GM12878 (cell line): ENCODE measurements at regions of chr22 and their contacts with region 1.

Region 1: GRCh38 chr22:26461188-26461810 is 22.3 kb downstream of the HPS4 start:
- DNase-seq: no peak
- ATAC-seq: peak; percentile 76
- H3K4me3 ChIP-seq: no peak overlapping the region
- H3K27ac ChIP-seq: no peak overlapping the region
- H3K4me1 ChIP-seq: no peaks in the 10 kb centered on the region
- H3K27me3 ChIP-seq: no peaks in the 10 kb centered on the region
- CTCF ChIP-seq: peak; percentile 69 to 82 (median 81)
- EP300 ChIP-seq: no peak
- POLR2A ChIP-seq: no peak
- RAD21 ChIP-seq: peak; percentile 68

Region 2: GRCh38 chr22:26377170-26377830 is 84.0 kb before region 1 on chr22:
- CTCF ChIA-PET with region 1: interaction called, 11 read pairs
- POLR2A ChIA-PET with region 1: no interaction called
- RAD21 ChIA-PET with region 1: interaction called, 3 read pairs
- SMC1A ChIA-PET with region 1: interaction called, 6 read pairs
- in situ Hi-C with region 1: no loop called
- intact Hi-C with region 1: no loop called
- DNase-seq: no peak
- ATAC-seq: no peak
- H3K4me3 ChIP-seq: no peak overlapping the region
- H3K27ac ChIP-seq: no peak overlapping the region
- H3K4me1 ChIP-seq: no peaks in the 10 kb centered on the region
- H3K27me3 ChIP-seq: peaks cover 3 to 9% of the 10 kb centered on the region in 2 experiments
- CTCF ChIP-seq: no peak; a peak in 1 of 6 replicates
- EP300 ChIP-seq: no peak
- POLR2A ChIP-seq: no peak
- RAD21 ChIP-seq: no peak

Region 3: GRCh38 chr22:26404851-26405421 is 56.4 kb before region 1 on chr22:
- CTCF ChIA-PET with region 1: interaction called, 111 read pairs
- POLR2A ChIA-PET with region 1: no interaction called
- RAD21 ChIA-PET with region 1: interaction called, 3 read pairs
- SMC1A ChIA-PET with region 1: interaction called, 73 read pairs
- in situ Hi-C with region 1: loop called (anchors 5 kb)
- intact Hi-C with region 1: no loop called
- DNase-seq: no peak
- ATAC-seq: peak; percentile 31; the same call in 2 of the 3 replicates
- H3K4me3 ChIP-seq: no peak overlapping the region
- H3K27ac ChIP-seq: no peak overlapping the region
- H3K4me1 ChIP-seq: no peaks in the 10 kb centered on the region; the same call in 1 of the 2 replicates
- H3K27me3 ChIP-seq: no peaks in the 10 kb centered on the region
- CTCF ChIP-seq: no peak
- EP300 ChIP-seq: no peak
- POLR2A ChIP-seq: no peak
- RAD21 ChIP-seq: no peak

Region 4: GRCh38 chr22:26471522-26471921 is 10.2 kb after region 1 on chr22:
- CTCF ChIA-PET with region 1: interaction called, 23 read pairs
- POLR2A ChIA-PET with region 1: no interaction called
- RAD21 ChIA-PET with region 1: no interaction called
- SMC1A ChIA-PET with region 1: interaction called, 3 read pairs
- in situ Hi-C with region 1: no loop called
- intact Hi-C with region 1: no loop called
- DNase-seq: no peak
- ATAC-seq: no peak
- H3K4me3 ChIP-seq: no peak overlapping the region
- H3K27ac ChIP-seq: no peak overlapping the region
- H3K4me1 ChIP-seq: peaks cover 5% of the 10 kb centered on the region
- H3K27me3 ChIP-seq: no peaks in the 10 kb centered on the region
- CTCF ChIP-seq: no peak
- EP300 ChIP-seq: no peak
- POLR2A ChIP-seq: no peak
- RAD21 ChIP-seq: no peak

Region 5: DNA sequence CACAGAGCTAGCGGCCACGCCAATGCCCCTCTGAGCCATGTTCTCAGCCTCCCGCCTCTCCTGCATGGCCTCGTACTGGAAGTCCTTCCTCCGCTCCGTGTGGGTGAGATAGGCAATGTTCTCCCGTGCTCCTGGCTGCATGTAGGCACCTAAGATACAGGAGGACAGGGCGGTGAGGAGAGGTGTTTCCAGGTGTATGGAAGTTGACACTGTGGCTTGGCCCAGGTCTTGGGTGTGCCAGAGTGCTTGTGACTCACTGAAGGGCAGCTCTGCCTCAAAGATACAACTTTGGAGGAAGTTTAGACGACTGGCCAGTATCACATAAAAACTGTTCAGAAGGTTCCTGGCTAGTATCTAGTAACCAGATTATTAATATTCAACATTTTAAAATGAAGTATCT is 30.9 kb after region 1 on chr22:
- CTCF ChIA-PET with region 1: no interaction called
- POLR2A ChIA-PET with region 1: no interaction called
- RAD21 ChIA-PET with region 1: no interaction called
- SMC1A ChIA-PET with region 1: no interaction called
- in situ Hi-C with region 1: no loop called
- intact Hi-C with region 1: no loop called
- DNase-seq: no peak
- ATAC-seq: no peak
- H3K4me3 ChIP-seq: no peak overlapping the region
- H3K27ac ChIP-seq: no peak overlapping the region
- H3K4me1 ChIP-seq: no peaks in the 10 kb centered on the region
- H3K27me3 ChIP-seq: no peaks in the 10 kb centered on the region
- CTCF ChIP-seq: no peak
- EP300 ChIP-seq: no peak
- POLR2A ChIP-seq: peak; percentile 49; the same call in 1 of the 2 replicates
- RAD21 ChIP-seq: no peak

Region 6: DNA sequence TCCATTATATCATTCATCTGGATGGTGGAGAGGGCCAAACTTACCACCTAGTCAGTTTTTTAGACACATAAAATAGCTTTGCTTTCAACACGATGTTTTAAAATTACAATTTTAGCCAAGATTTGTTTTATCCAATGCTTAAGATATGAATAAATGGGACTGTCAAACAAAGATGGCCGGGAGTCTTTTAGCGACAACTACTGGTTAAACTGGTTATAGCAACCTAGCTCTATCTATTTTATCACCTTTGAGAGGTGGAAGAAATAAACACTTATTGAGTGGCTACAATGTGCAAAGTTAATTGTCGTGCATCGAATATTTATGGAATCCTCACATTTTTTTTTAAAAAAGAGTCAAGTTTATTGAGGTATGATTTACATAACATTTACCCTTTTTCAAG is 475.9 kb after region 1 on chr22:
- CTCF ChIA-PET with region 1: no interaction called
- POLR2A ChIA-PET with region 1: no interaction called
- RAD21 ChIA-PET with region 1: no interaction called
- SMC1A ChIA-PET with region 1: no interaction called
- in situ Hi-C with region 1: no loop called
- intact Hi-C with region 1: no loop called
- DNase-seq: no peak
- ATAC-seq: no peak
- H3K4me3 ChIP-seq: no peak overlapping the region
- H3K27ac ChIP-seq: no peak overlapping the region
- H3K4me1 ChIP-seq: no peaks in the 10 kb centered on the region
- H3K27me3 ChIP-seq: no peaks in the 10 kb centered on the region; a peak in 1 of 4 replicates
- CTCF ChIP-seq: no peak
- EP300 ChIP-seq: no peak
- POLR2A ChIP-seq: no peak
- RAD21 ChIP-seq: no peak